Posterior cingulate gyrus (tissue), 11 donors: ENCODE measurements at regions of chr3 and their contacts with region 1.

Region 1: GRCh38 chr3:8769088-8769822 is at the start of gene OXTR:
- DNase-seq: peak; percentile 58 to 96 (median 78)

Region 2: GRCh38 chr3:8888301-8888915 is 119.2 kb after region 1 on chr3:
- intact Hi-C with region 1: no loop called
- DNase-seq: no peak

Region 3: DNA sequence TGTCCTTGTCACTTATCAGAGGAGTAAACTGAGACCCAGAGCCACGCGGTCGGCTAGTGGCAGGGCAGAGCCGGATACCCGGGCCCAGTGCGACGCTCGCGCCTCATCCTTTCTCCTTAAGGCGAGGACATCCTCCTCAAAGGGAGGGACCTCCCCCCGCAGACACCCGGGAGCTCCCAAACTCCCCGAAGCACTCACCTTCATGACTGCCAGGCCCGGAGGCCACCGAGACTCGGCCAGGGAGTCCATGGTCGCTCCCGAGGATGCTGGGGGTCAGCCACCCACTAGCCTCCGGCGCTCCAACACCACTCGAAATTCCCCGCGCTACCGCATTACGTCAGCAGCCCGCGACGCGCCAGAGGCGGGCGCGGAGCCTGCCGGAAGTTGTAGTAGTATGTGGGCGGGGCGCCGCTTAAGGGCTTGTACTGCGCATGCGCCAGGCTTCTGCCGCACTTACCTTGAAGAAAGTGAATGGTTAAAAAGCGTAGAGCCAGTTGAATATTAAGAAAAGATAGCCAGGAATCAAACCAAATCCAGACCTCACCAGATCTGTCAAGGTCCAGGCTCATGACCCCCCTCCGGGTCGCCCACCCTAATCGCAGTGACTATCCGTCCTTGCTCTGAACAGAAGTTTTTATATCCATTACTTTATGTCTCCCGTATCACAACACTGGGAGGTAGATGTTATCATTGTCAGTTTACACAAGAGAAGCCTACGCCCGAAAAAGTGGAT is 194.0 kb after region 1 on chr3 and contains the start of gene RAD18:
- intact Hi-C with region 1: loop called (anchors 10 kb)
- DNase-seq: peak; percentile 74 to 98 (median 85)

Region 4: GRCh38 chr3:9013782-9014563 is 244.7 kb after region 1 on chr3:
- intact Hi-C with region 1: no loop called
- DNase-seq: no peak